CD4-positive, alpha-beta T cell (primary cell): ENCODE measurements at regions of chr1 and their contacts with region 1.

Region 1: GRCh38 chr1:113072757-113073478 is at the start of gene LRIG2:
- DNase-seq: peak; percentile 94 to 99 (median 98)
- ATAC-seq: peak; percentile 96
- H3K4me3 ChIP-seq: peak within 1 kb of the TSS; percentile 78
- H3K4me3 Mint-ChIP-seq: peak within 1 kb of the TSS; percentile 92
- H3K27ac ChIP-seq: peak within 1 kb of the TSS; percentile 74 to 75
- H3K27ac Mint-ChIP-seq: peak within 1 kb of the TSS; percentile 84
- H3K4me1 ChIP-seq: peaks cover 31% of the 10 kb centered on the region
- H3K4me1 Mint-ChIP-seq: peaks cover 34% of the 10 kb centered on the region
- H3K27me3 ChIP-seq: no peaks in the 10 kb centered on the region
- H3K27me3 Mint-ChIP-seq: no peaks in the 10 kb centered on the region
- CTCF ChIP-seq: peak; percentile 96
- total RNA-seq, gene LRIG2: 12.9 to 15.8 TPM

Region 2: DNA sequence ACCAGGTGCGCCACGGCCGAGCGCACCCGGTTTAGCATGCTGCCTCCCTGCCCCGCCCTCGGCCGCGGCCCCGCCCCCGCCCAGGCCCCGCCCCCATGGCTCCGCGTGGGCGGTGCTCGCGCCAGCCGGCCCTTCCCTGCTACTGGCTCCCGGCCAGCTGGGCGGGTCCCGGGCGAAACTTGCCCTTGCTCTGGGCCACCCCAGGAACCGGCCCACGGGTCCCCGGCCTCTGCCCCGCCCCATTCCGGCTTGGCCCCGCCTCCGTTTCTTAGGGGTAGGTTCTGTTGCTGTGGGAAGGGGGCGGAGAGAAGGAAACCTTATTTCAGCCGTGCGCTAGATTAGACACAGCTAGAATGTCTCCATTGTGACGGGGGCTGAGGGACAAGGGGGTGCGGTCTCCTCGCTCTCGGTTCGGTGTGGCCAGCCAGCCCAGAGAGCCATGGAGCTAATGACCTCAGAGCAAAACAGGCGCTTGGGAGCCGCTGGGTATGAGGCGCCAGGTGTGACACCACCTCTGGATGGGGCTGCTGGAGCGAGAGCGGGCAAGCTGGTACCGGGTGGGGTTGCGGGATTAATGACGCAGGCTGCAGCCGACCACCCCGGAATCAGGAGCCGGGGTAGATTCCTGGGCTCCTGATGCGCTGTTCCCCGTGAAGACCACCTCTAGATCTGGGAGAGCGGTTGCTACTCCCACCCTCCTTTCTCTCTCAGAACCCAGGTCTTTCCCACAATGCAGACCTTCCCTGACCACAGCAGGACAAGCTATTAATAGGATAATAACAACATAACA is 357.5 kb before region 1 on chr1 and contains the start of gene PPM1J:
- CTCF ChIA-PET with region 1: interaction called, 23 read pairs
- POLR2A ChIA-PET with region 1: interaction called, 19 read pairs
- intact Hi-C with region 1: loop called (anchors 2 kb)
- DNase-seq: peak; percentile 91 to 99 (median 96)
- ATAC-seq: peak; percentile 84
- H3K4me3 ChIP-seq: peak within 1 kb of the TSS; percentile 69
- H3K4me3 Mint-ChIP-seq: peak within 1 kb of the TSS; percentile 89
- H3K27ac ChIP-seq: peak within 1 kb of the TSS in 1 of 2 donors; percentile 39
- H3K27ac Mint-ChIP-seq: peak within 1 kb of the TSS; percentile 81
- H3K4me1 ChIP-seq: peaks cover 37% of the 10 kb centered on the region
- H3K4me1 Mint-ChIP-seq: peaks cover 24% of the 10 kb centered on the region
- H3K27me3 ChIP-seq: peaks cover 15 to 22% of the 10 kb centered on the region in 2 experiments
- H3K27me3 Mint-ChIP-seq: peaks cover 35% of the 10 kb centered on the region
- CTCF ChIP-seq: no peak
- total RNA-seq, gene PPM1J: 0.39 to 0.49 TPM

Region 3: DNA sequence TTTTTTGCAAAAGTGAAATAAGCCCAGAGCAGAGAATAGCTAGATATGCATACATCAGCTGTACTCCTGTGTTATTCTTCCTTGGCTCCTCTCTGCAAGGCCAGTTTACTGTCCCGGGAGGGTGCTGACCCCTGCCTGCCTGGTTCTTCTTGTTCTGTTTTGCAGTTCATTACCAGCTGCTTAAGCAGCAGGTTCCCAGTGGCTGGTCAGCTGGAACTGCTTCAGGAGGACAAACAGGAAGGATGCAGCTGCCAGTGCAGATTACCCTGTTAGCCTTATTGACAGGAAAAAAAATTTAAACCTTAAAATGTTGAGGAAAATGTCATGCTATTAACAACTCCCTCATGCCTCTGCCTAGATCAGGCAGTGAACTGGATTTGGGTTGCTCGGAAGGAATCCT is 15.9 kb before region 1 on chr1:
- CTCF ChIA-PET with region 1: interaction called, 12 read pairs
- POLR2A ChIA-PET with region 1: interaction called, 5 read pairs
- intact Hi-C with region 1: no loop called
- DNase-seq: no peak
- ATAC-seq: no peak
- H3K4me3 ChIP-seq: no peak overlapping the region
- H3K4me3 Mint-ChIP-seq: no peak overlapping the region
- H3K27ac ChIP-seq: no peak overlapping the region
- H3K27ac Mint-ChIP-seq: no peak overlapping the region
- H3K4me1 ChIP-seq: peaks cover 3% of the 10 kb centered on the region
- H3K4me1 Mint-ChIP-seq: no peaks in the 10 kb centered on the region
- H3K27me3 ChIP-seq: no peaks in the 10 kb centered on the region
- H3K27me3 Mint-ChIP-seq: no peaks in the 10 kb centered on the region
- CTCF ChIP-seq: no peak

Region 4: GRCh38 chr1:113103042-113103441 is 30.1 kb after region 1 on chr1:
- CTCF ChIA-PET with region 1: interaction called, 17 read pairs
- POLR2A ChIA-PET with region 1: interaction called, 3 read pairs
- intact Hi-C with region 1: no loop called
- DNase-seq: no peak
- ATAC-seq: no peak
- H3K4me3 ChIP-seq: no peak overlapping the region
- H3K4me3 Mint-ChIP-seq: no peak overlapping the region
- H3K27ac ChIP-seq: no peak overlapping the region
- H3K27ac Mint-ChIP-seq: no peak overlapping the region
- H3K4me1 ChIP-seq: no peaks in the 10 kb centered on the region
- H3K4me1 Mint-ChIP-seq: no peaks in the 10 kb centered on the region
- H3K27me3 ChIP-seq: no peaks in the 10 kb centered on the region
- H3K27me3 Mint-ChIP-seq: no peaks in the 10 kb centered on the region
- CTCF ChIP-seq: no peak

Region 5: DNA sequence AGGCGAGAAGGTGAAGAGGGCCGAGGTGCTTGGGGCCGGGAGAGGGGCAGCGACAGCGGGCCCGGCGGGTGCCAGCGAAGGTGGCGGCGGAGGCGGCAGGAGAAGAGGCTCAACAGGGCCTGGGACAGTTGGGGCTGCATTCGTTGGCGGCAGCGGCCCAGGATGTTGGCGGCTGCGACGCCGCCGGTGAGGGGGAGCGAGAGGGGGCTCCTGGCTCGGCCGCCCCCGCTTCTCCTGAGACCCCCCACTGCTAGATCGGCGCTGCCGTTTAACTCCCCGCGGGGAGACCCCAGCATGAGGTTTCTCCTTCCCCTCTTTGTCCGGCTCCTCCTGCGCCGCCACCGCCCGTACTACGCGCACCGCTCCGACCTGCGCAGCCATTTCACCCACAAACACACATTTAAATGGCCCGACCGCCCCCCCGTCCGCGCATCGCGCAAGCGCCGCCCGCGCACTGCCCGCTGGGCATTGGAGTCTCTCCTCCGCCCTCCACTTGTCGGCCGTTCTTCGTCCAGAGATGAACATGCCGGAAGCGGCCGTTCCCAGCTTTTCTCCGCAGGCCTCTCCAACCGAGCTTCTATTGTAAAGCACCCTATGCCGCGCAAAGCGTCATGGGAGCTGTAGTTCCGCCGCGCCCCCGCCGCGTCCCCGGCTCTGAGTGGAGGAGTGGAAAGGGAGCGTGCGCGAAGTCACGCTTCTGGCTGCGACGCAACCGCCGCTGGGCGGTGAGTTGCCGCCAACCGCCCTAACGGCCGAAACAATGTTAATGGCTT is 739.2 kb after region 1 on chr1 and contains the start of gene RSBN1:
- CTCF ChIA-PET with region 1: no interaction called
- POLR2A ChIA-PET with region 1: interaction called, 6 read pairs
- intact Hi-C with region 1: loop called (anchors 2 to 10 kb)
- DNase-seq: peak; percentile 96 to 100 (median 97)
- ATAC-seq: peak; percentile 91
- H3K4me3 ChIP-seq: peak within 1 kb of the TSS; percentile 89
- H3K4me3 Mint-ChIP-seq: peak within 1 kb of the TSS; percentile 97
- H3K27ac ChIP-seq: peak within 1 kb of the TSS; percentile 89 to 96
- H3K27ac Mint-ChIP-seq: peak within 1 kb of the TSS; percentile 96
- H3K4me1 ChIP-seq: peaks cover 15% of the 10 kb centered on the region
- H3K4me1 Mint-ChIP-seq: peaks cover 47% of the 10 kb centered on the region
- H3K27me3 ChIP-seq: no peaks in the 10 kb centered on the region
- H3K27me3 Mint-ChIP-seq: no peaks in the 10 kb centered on the region
- CTCF ChIP-seq: peak; percentile 15
- total RNA-seq, gene RSBN1: 44.2 to 44.6 TPM